ENCODE measurements at regions of chr17 and their contacts with region 1.

Region 1: DNA sequence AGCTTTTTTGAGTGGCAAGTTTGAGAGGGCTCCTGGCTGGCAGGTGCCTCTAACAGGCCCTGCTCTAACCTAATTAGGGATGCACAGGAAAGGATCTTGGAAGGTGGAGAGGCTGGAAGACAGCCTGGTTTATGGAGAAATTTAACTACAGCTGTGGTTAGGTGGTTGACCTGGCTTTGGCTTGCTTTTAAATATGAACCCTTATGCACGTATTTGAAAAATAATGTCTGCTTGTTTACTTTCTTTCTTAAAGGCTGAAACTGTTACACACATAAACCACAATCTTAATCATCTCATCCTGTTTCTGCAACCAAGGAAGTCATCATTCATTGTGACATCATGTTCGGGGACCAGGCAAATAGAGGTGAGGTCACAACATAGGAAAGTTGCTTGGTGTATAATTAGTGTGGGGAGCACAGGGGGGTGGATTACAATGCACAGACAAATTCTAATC is 23.1 kb upstream of the DHRS13 start:
- DNase-seq: peak; percentile 62
- H3K4me3 Mint-ChIP-seq: peak overlapping the region; percentile 19
- H3K27ac Mint-ChIP-seq: peak overlapping the region; percentile 92
- H3K4me1 Mint-ChIP-seq: peaks cover 58% of the 10 kb centered on the region
- H3K27me3 Mint-ChIP-seq: no peaks in the 10 kb centered on the region

Region 2: DNA sequence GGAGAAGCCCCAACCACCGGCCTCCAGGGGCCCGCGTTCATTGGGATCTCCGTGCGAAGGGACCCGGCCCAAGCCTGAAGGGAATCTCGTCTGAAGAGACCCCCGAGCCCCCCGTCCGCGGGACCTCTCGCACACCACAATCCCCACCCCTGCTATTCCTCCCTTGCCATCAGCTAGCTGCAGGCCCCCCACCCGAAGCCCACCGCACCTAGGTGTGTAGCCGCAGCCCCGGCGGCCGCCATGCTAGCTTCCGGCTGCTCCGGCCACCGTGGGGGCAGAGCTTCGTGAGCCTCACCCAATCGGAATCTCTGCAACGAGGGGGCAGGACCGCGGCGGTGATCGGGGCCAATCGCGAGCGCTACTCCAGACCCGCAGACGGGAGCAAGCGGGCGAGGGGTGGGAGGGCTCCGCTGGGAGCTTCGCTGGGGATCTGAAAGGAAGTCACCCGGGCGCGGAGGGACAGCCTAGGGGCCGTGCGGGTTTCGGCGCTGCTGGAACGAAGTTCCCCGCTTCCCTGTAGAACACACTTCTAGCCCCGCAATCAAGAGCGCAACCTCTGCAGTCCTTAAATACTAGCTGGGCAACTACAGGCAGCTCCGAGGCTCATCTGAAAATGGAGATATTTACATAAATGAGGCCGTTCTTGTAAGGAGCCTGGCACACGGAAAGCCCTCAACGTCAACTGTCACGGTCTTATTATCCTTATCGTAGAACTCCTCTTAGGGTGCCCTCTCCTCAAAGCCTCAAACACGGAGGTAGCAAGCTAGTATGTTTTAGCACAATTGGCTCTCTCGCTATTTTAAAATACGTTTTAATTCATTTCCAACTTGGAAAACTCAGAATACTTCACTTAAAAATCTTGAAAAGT is 354.4 kb before region 1 on chr17 and contains the start of gene PIGS:
- intact Hi-C with region 1: loop called (anchors 10 kb)
- DNase-seq: peak; percentile 91
- H3K4me3 Mint-ChIP-seq: peak within 1 kb of the TSS; percentile 94
- H3K27ac Mint-ChIP-seq: peak within 1 kb of the TSS; percentile 88
- H3K4me1 Mint-ChIP-seq: peaks cover 81% of the 10 kb centered on the region
- H3K27me3 Mint-ChIP-seq: no peaks in the 10 kb centered on the region
- total RNA-seq, gene PIGS: 57.8 and 61.2 TPM in 2 replicates

Region 3: DNA sequence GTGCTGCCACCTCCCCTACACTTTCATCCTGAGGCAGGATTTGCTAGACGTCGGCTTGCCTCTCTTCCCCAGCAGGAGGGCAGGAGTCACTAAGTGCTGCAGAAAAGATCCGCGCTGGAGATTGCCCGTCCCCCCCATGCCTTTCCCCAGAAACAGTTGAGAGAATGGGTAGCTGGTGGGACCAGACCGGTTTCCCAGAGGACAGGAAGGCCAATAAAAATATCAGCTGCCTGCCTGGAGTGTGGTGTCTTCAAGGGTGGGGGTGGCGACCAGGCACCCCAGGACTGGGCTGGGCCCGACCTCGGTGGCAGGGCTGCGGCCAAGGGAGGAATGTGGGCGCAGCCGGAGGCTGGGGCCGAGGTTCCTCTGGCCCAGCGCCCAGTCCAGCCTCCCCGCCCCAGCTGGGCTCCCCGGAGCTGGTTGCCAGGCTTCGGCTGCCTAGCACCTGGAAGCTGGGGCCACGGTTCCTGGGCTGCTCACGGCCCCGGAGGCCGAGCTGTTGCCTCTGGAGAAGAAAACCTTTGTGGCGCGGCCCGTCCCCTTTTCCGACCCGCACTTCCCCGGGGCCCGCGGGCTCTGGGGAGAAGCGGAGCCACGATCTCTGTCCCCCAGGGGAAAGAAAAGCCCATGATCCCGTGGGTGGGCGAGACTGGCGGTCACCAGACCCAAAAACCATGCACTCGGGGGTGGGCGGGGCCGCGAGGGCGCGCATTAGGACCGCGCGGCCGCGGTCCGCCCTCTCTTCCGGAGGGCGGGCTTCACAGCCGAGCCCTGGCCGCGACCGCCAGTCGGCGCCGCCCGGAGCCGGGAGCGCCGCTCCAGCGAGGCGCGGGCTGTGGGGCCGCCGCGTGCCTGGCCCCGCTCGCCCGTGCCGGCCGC is 182.5 kb before region 1 on chr17 and contains the start of gene TRAF4:
- intact Hi-C with region 1: loop called (anchors 5 kb)
- DNase-seq: peak; percentile 72
- H3K4me3 Mint-ChIP-seq: peak within 1 kb of the TSS; percentile 90
- H3K27ac Mint-ChIP-seq: peak within 1 kb of the TSS; percentile 82
- H3K4me1 Mint-ChIP-seq: peaks cover 34% of the 10 kb centered on the region
- H3K27me3 Mint-ChIP-seq: no peaks in the 10 kb centered on the region
- total RNA-seq, gene TRAF4: 178 and 182 TPM in 2 replicates

Region 4: GRCh38 chr17:28902819-28903545 is 23.0 kb before region 1 on chr17 and contains the start of gene DHRS13:
- intact Hi-C with region 1: loop called (anchors 2 kb)
- DNase-seq: peak; percentile 93
- H3K4me3 Mint-ChIP-seq: peak within 1 kb of the TSS; percentile 91
- H3K27ac Mint-ChIP-seq: peak within 1 kb of the TSS; percentile 79
- H3K4me1 Mint-ChIP-seq: peaks cover 39% of the 10 kb centered on the region
- H3K27me3 Mint-ChIP-seq: no peaks in the 10 kb centered on the region
- total RNA-seq, gene DHRS13: 34.6 and 34.9 TPM in 2 replicates

Region 5: GRCh38 chr17:29140051-29140621 is 214.2 kb after region 1 on chr17:
- intact Hi-C with region 1: loop called (anchors 1 kb)
- DNase-seq: peak; percentile 82
- H3K4me3 Mint-ChIP-seq: peak overlapping the region; percentile 96
- H3K27ac Mint-ChIP-seq: peak overlapping the region; percentile 100
- H3K4me1 Mint-ChIP-seq: peaks cover 80% of the 10 kb centered on the region
- H3K27me3 Mint-ChIP-seq: no peaks in the 10 kb centered on the region

Measured in activated T-helper 1 cell treated with anti-CD3 and anti-CD28 coated beads, Interleukin-12 subunit alpha, Interleukin-12 subunit beta, Interleukin-2, Interleukin-4 antibody, amounts not matched to agents 30 ng/mL and 10 ng/mL and 1 ng/mL, durations not matched to agents 14 hours and 24 hours and 36 hours (primary cell).